Heart right ventricle (tissue), 16 donors: ENCODE measurements at regions of chr1 and their contacts with region 1.

Region 1: DNA sequence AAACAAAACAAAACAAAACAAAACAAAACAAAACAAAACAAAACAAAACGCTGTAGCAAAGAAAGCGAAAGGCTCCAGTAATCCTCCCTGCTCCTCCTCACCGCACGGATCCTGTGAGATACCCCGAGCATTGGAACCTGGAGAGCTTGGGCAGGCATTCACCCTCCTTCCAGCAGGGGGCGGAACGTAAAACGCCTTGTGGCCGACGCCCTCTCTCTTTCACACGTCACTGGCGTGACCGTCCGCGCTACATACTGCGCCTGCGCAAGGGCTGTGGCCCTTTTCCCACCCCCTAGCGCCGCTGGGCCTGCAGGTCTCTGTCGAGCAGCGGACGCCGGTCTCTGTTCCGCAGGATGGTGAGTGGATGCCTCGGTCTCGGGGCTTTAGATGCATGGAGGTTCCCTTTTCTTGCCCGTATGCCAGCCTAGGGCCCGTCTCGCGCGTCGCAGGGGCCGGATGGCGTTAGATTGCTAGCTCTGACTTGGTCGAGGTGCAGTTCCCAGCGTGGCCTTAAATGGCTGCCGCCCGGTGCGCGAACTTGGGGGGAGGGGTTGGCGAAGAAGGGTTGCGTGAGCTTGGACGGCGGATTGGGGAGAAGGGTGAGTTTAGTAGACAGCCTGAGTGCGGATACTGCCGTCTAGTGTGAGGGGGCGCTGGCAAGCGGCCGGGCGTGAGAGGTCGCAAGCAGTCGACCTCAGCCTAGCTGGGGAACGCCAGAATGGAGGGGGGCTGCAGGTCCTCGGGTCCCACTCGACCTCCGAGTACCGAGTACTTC is at the start of gene RPL5:
- DNase-seq: peak; percentile 97
- ATAC-seq: peak; percentile 96 to 99 (median 98)
- H3K4me3 ChIP-seq: peak within 1 kb of the TSS; percentile 66 to 92 (median 80)
- H3K27ac ChIP-seq: peak within 1 kb of the TSS; percentile 60 to 96 (median 88)
- H3K4me1 ChIP-seq: peaks cover 5 to 43% (median 36%) of the 10 kb centered on the region in 9 donors
- H3K27me3 ChIP-seq: no peaks in the 10 kb centered on the region
- CTCF ChIP-seq: peak; percentile 90 to 96 (median 95)
- total RNA-seq, gene RPL5: 468 to 646 (median 544) TPM

Region 2: GRCh38 chr1:92784639-92785500 is 47.1 kb before region 1 on chr1 and contains the start of gene EVI5:
- intact Hi-C with region 1: loop called in 1 of 10 experiments (anchors 5 kb)
- DNase-seq: peak; percentile 94
- ATAC-seq: peak; percentile 96 to 98 (median 97)
- H3K4me3 ChIP-seq: peak within 1 kb of the TSS; percentile 47 to 91 (median 75)
- H3K27ac ChIP-seq: peak within 1 kb of the TSS; percentile 67 to 100 (median 95)
- H3K4me1 ChIP-seq: peaks cover 0 to 49% (median 26%) of the 10 kb centered on the region in 9 donors
- H3K27me3 ChIP-seq: no peaks in the 10 kb centered on the region
- CTCF ChIP-seq: peak in 4 of 9 donors; percentile 10 to 45 (median 29)
- total RNA-seq, gene EVI5: 20.5 to 46.2 (median 27.4) TPM

Region 3: GRCh38 chr1:93878889-93879586 is 1047.1 kb after region 1 on chr1 and contains the start of gene DNTTIP2:
- intact Hi-C with region 1: loop called in 1 of 10 experiments (anchors 10 kb)
- DNase-seq: peak; percentile 88 to 95
- ATAC-seq: peak; percentile 96 to 99 (median 99)
- H3K4me3 ChIP-seq: peak within 1 kb of the TSS; percentile 45 to 100 (median 82)
- H3K27ac ChIP-seq: peak within 1 kb of the TSS; percentile 47 to 98 (median 90)
- H3K4me1 ChIP-seq: peaks cover 0 to 36% (median 35%) of the 10 kb centered on the region in 9 donors
- H3K27me3 ChIP-seq: no peaks in the 10 kb centered on the region
- CTCF ChIP-seq: no peak
- total RNA-seq, gene DNTTIP2: 33.9 to 44.3 (median 41.7) TPM